Cardiac septum (tissue), 1 donor: ENCODE measurements at regions of chr17 and their contacts with region 1.

Region 1: GRCh38 chr17:67376737-67377487 is at the start of gene PITPNC1:
- DNase-seq: peak; percentile 92
- total RNA-seq, gene PITPNC1: 12.5 TPM

Region 2: DNA sequence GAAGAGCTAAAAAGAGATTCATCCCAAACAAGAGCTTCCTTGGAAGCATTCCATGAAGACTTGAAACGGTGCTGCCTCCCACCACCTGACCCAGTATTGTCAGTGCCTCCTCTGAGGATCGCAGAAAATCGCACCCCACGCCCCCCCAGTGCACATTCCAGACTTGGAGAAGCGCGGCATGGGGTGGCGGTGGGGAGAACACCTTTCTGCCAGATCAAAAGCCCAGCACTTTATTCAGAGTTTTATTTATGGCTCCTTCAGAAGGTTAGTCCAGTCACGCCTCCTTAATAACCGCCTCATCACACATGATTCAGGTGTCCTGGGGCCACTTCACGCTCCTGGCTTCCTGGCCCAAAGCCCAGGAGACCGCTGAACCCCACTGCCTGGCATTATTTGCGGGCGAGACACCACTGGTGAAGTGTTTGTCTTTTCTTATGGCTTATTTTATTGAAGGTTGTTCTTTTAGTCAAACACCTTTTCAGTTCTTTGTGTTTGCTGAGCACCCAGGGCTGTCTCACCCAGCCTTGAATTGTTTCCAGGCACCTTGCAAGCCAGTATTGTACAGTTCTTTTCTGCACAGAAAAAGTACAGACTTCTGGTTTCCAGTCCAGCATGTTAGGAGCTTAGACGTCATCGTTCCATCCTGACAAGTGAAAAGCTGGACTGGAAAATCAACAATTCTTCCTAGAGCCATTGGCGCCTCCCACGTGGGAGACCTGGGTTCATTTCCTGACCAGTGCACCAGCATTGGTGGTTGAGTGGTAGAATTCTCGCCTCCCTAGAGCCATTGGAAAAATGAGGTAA is 621.6 kb before region 1 on chr17:
- intact Hi-C with region 1: no loop called
- DNase-seq: no peak

Region 3: GRCh38 chr17:67212689-67213417 is 164.1 kb before region 1 on chr17:
- intact Hi-C with region 1: no loop called
- DNase-seq: no peak

Region 4: DNA sequence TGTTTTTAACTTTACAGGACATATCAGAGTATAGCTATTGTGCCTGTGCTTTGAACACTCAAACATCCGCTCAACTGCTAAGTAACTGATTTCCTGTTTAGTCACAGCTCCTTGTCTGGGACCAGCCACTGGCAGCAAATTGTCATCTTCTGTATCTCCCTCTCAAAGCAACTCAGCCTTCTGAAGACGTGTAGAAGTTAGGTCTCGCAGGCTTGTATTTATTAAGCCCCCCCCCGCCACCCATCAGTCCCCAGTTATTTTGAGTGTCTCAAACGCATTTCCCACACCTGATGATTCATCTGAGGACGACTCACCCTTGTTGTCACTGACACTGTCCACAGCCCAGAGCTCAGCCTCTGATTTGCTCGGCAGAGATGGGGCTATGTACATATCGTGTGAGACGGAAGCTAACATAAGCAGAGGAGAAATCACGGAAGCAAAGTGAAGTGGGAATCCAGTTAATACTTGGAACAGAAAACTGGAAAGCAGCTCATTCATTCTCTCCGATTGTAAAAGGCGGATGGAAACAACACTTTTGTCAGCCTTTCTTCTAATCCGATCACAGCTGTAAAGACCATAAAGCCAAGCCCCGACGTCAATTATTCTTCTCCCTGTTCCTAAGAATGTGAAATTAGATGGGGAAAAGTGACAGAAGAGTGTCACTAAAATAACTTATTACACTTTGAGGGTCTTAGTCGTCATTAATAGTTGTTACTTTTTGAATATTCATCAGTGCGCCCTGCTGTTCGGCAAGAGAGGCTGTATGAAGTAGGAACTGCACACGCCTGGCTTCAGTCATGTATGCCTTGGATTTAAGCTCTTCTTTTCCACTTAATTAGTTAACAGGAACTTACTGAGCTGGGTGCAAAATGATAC is 64.4 kb after region 1 on chr17:
- intact Hi-C with region 1: loop called (anchors 5 kb)
- DNase-seq: no peak

Region 5: GRCh38 chr17:67475236-67475937 is 98.5 kb after region 1 on chr17:
- intact Hi-C with region 1: loop called (anchors 2 kb)
- DNase-seq: peak; percentile 89

Region 6: GRCh38 chr17:67602956-67603355 is 226.0 kb after region 1 on chr17:
- intact Hi-C with region 1: loop called (anchors 5 kb)
- DNase-seq: no peak

Region 7: DNA sequence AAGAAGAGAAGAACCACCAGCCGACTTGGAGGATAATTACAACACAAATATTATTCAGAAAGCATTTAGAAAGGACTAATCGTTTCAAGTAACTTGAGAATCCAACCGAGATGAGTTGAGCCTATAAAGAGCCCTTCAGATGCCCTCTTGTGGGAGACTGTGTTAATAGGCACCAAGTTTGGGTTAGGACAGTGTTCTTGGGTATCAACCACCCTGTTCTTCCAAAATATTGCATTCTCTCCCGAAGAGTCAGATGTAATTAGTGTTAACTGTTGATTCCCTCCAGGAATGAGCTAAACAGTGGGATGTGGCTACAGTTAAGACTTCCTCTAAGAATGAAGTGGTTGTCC is 253.0 kb after region 1 on chr17:
- intact Hi-C with region 1: loop called (anchors 5 kb)
- DNase-seq: no peak

Region 8: GRCh38 chr17:67689534-67690177 is 312.7 kb after region 1 on chr17:
- intact Hi-C with region 1: loop called (anchors 1 kb)
- DNase-seq: no peak